Mammary epithelial cell (primary cell): ENCODE measurements at regions of chr2 and their contacts with region 1.

Region 1: DNA sequence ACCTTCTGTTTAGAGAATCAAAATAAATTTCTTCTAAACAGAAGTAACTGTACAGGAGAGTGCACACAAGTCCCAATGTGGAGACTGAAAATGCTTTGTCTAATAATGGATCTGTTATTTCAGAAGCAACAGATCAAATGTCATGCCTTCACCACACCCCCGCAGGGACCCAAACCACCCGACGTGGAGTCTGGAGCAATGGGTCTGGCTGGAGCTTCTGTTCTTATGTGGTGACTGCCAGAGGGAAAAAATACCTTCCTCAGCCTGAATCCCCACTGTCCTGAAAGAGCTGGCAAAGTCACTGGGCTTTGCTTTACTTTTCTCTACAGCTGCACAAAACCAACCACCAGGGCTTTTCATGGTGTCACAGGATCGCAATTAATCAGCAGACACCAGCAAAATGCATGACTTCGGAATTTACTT is 119.0 kb upstream of the ZFP36L2 start:
- DNase-seq: no peak
- H3K4me3 ChIP-seq: no peak overlapping the region
- H3K27ac ChIP-seq: no peak overlapping the region
- H3K4me1 ChIP-seq: peaks cover 15% of the 10 kb centered on the region
- H3K27me3 ChIP-seq: no peaks in the 10 kb centered on the region
- CTCF ChIP-seq: no peak

Region 2: GRCh38 chr2:43269074-43269572 is 76.3 kb before region 1 on chr2:
- CTCF ChIA-PET with region 1: no interaction called
- dilution Hi-C with region 1: no loop called
- in situ Hi-C with region 1: no loop called
- intact Hi-C with region 1: no loop called
- DNase-seq: no peak
- H3K4me3 ChIP-seq: no peak overlapping the region
- H3K27ac ChIP-seq: no peak overlapping the region
- H3K4me1 ChIP-seq: peaks cover 4% of the 10 kb centered on the region
- H3K27me3 ChIP-seq: no peaks in the 10 kb centered on the region
- CTCF ChIP-seq: no peak

Region 3: GRCh38 chr2:43387092-43388062 is 42.0 kb after region 1 on chr2:
- CTCF ChIA-PET with region 1: no interaction called
- dilution Hi-C with region 1: loop called (anchors 5 kb)
- in situ Hi-C with region 1: no loop called
- intact Hi-C with region 1: no loop called
- DNase-seq: peak; percentile 4
- H3K4me3 ChIP-seq: no peak overlapping the region
- H3K27ac ChIP-seq: no peak overlapping the region
- H3K4me1 ChIP-seq: no peaks in the 10 kb centered on the region
- H3K27me3 ChIP-seq: no peaks in the 10 kb centered on the region
- CTCF ChIP-seq: no peak

Region 4: DNA sequence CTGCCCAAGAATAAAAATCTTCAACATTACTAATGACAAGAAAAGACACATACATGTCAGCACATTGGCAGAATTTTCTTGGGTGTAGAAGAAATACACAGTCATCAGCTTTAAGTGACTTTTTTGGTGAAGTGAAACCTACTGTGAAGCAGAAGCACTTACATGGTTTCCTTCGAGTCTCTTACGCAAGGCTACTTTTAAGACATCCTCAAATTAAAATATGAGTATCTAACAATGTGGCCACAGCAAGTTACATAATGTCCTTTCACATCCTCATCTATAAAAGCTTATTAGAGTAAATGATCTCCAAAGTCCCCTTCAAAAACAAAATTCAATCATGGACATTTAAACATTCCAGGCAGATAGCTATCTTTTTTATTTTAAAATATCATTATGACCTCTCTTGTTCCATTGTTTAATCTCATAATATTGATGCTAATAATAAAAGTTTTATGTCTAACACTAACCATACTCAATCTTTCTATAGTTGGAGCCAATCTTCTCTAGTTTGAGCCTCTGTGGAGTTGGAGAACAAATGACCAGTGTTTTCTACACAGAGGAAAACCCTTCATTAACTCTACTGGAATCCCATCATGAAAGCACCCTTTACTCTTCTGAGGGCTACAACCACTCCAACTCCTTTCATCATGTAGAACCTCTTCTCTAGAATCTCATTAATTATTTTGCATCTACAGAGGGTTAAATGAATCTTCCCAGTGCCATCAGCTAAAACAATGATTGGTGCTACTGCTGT is 63.2 kb after region 1 on chr2:
- CTCF ChIA-PET with region 1: no interaction called
- dilution Hi-C with region 1: no loop called
- in situ Hi-C with region 1: no loop called
- intact Hi-C with region 1: no loop called
- DNase-seq: no peak
- H3K4me3 ChIP-seq: no peak overlapping the region
- H3K27ac ChIP-seq: no peak overlapping the region
- H3K4me1 ChIP-seq: peaks cover 8% of the 10 kb centered on the region
- H3K27me3 ChIP-seq: no peaks in the 10 kb centered on the region
- CTCF ChIP-seq: no peak